ENCODE measurements at regions of chr17 and their contacts with region 1.

Region 1: DNA sequence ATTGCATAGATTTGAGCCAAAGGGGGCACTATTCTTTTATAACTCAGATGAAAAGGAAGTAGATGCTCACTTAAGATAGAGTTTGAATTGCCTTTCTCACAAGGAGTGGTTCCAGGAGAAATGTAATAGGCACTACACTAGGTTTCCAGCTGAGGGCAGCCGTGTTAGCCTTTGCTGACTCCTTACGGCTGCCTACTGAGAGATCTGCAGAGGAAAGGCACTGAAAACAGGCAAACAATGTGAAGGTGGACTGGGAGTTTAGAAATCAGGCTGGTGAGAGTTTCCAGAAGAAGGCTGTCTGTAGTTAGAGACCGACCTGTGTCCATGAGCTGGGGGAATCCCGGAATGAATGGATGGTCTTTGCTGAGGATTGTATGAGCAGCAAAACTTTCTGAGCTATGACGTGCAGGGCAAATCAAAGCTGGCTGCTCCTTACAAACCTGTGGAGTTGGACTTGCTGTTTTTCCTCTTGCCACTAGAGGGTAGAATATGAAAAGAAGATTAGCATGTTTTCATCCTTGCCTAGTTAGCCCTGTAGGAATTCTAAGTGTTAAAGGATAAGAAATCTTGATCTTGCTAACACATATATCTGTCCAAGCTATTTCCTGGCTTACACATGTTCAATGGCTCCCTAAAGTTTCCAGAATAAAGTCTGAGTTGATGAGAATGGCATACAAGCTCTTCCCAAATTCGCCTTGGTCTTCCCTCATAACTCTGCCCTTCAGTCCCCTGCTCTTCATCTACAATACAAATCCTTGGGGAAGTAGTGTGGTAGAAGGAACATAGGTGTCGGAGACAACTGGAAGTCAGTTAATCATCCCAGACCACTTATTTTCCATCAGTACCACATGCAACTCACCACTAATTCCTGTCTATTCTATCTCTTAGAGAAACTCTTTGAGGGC is 20.1 kb upstream of the TAOK1 start:
- DNase-seq: peak; percentile 60
- ATAC-seq: peak; percentile 93
- H3K4me3 Mint-ChIP-seq: no peak overlapping the region
- H3K27ac Mint-ChIP-seq: no peak overlapping the region
- H3K4me1 Mint-ChIP-seq: no peaks in the 10 kb centered on the region
- H3K27me3 Mint-ChIP-seq: no peaks in the 10 kb centered on the region

Region 2: DNA sequence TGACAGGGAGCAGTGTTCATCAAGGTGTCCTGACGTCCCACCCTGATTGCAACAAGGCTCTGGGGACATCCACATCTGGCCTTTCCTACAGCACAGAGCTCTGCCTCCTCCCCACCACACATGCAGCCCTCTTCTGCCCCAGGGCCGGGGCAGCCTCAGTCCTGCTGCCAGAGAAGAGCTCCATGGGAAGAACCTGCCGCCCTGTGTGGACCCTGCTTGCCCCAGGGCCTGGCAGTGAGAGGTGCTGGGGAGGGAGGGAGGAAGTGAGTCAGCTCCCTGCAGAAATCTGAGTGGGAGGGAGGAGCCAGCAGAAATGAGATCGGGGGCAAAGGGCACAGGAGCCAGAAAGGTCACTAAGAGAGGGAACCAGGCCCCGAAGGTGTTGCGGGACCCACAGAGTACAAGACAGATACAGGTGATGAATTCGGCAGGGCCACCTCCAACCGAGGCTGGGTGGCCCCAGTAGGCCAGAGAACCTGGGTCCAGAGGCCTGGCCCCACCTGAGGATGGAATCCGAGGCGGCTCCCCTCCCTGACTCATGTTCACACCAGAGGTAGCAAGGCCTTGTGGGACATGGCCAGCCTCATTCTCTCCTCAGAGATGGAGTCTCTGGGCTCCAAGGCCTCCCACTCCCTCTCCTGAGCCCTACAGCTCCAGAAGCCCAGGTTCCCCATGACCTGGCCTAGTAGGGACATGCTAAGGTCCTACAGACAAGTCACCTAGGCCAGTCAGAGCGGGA is 214.7 kb before region 1 on chr17:
- CTCF ChIA-PET with region 1: no interaction called
- POLR2A ChIA-PET with region 1: no interaction called
- DNase-seq: peak; percentile 74
- ATAC-seq: peak; percentile 91
- H3K4me3 Mint-ChIP-seq: peak overlapping the region; percentile 20
- H3K27ac Mint-ChIP-seq: peak overlapping the region; percentile 84
- H3K4me1 Mint-ChIP-seq: peaks cover 55% of the 10 kb centered on the region
- H3K27me3 Mint-ChIP-seq: no peaks in the 10 kb centered on the region

Region 3: DNA sequence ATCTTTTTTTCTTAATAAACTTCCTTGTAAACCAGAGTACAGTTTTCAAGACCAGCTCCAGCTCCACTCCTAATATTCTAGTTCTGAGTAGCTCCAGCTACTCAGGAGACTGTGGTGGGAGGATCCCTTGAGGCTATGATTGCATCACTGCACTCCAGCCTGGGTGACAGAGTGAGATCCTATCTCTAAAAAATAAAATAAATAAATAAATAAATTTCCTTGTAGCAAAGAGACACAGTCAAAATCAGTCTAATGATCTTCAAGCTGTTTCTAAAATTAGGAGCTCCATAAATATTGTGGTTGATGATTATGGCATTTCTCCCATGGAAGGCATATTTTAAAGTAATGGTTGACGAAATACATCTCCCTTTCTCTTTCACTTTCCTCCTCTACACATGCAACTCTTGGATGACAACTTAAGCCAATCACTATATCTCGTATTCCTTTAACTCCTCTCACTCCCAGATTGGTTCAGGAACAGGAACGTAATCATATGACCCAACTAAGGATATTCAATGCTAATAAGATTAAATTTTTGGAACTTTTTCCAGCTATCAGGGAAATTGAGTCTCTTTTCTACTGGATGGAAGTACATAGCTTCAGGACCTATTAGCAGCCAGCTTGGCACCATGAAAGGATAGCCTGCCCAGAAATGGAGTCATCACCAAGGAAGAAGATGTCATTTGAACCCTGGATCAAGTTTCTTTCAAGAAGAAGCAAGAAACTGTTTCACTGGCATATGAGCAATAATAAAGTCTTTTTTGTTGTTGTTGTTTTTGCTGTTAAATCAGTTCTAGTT is 22.1 kb before region 1 on chr17:
- CTCF ChIA-PET with region 1: interaction called, 18 read pairs
- POLR2A ChIA-PET with region 1: no interaction called
- DNase-seq: no peak
- ATAC-seq: no peak
- H3K4me3 Mint-ChIP-seq: no peak overlapping the region
- H3K27ac Mint-ChIP-seq: no peak overlapping the region
- H3K4me1 Mint-ChIP-seq: no peaks in the 10 kb centered on the region
- H3K27me3 Mint-ChIP-seq: peaks cover 10% of the 10 kb centered on the region

Region 4: GRCh38 chr17:29384900-29385299 is 14.8 kb after region 1 on chr17:
- CTCF ChIA-PET with region 1: interaction called, 42 read pairs
- POLR2A ChIA-PET with region 1: no interaction called
- DNase-seq: no peak
- ATAC-seq: no peak
- H3K4me3 Mint-ChIP-seq: no peak overlapping the region
- H3K27ac Mint-ChIP-seq: no peak overlapping the region
- H3K4me1 Mint-ChIP-seq: peaks cover 12% of the 10 kb centered on the region
- H3K27me3 Mint-ChIP-seq: no peaks in the 10 kb centered on the region

Region 5: DNA sequence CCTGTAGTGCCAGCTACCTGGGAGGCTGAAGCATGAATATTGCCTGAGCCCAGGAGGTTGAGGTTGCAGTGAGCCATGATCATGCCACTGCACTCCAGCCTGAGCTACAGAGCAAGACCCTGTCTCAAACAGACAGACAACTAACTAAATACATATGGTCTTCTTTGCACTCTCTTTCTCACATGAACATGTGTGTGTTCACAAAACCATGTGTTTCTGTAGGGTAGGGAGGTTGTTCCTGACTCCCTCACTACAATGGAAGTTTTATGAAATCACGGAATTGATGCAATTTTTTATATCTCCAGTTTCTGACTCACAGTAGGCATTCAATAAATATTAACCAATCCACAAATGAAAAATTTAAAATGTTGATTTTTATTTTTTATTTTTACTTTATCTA is 148.3 kb after region 1 on chr17:
- CTCF ChIA-PET with region 1: interaction called, 20 read pairs
- POLR2A ChIA-PET with region 1: no interaction called
- DNase-seq: no peak
- ATAC-seq: no peak
- H3K4me3 Mint-ChIP-seq: no peak overlapping the region
- H3K27ac Mint-ChIP-seq: no peak overlapping the region
- H3K4me1 Mint-ChIP-seq: no peaks in the 10 kb centered on the region
- H3K27me3 Mint-ChIP-seq: no peaks in the 10 kb centered on the region

Region 6: GRCh38 chr17:29533976-29534375 is 163.9 kb after region 1 on chr17:
- CTCF ChIA-PET with region 1: interaction called, 76 read pairs
- POLR2A ChIA-PET with region 1: interaction called, 3 read pairs
- DNase-seq: no peak
- ATAC-seq: no peak
- H3K4me3 Mint-ChIP-seq: no peak overlapping the region
- H3K27ac Mint-ChIP-seq: no peak overlapping the region
- H3K4me1 Mint-ChIP-seq: no peaks in the 10 kb centered on the region
- H3K27me3 Mint-ChIP-seq: no peaks in the 10 kb centered on the region

Region 7: DNA sequence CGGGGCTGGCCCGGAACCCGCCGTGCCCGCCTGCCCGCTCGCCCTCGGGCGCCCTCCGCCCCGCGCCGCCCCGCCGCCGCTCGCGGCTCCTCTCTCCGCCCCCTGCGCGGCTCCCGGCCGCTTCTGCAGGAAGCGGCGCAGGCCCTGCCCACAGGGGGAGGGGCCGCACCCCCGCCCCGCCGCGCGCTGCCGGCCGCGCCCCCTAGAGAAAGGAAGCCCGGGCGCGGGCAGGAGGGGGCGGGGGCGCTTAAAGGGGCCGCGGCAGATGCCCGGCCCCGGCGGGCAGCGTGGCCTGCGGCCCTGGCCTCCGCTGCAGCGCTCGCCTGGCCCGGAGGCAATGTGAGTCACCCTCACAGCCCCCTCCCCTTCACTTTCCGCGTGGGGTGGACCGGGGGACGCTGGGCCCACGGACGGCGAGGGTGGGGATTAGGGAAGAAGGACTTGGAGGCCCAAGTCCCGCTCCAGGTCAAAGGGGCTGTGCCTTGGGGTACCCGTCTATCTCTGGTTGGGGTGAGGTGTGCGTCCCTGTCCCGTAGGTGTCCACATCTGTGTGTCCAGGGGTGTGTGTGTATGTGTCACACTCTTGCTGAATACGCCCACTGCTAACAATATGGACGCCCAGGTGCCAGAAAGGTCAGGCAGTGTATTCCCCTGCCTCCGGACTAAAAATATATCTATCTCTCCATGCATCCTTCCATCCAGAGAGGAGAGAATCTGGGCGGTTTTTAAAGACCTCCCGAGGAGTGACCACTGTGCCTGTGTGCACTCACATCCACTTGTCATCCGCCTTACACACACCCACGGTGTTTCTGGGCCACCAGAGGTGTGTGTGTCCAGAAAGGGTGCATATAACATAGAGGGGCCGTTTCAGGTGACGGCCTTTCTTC is 219.7 kb after region 1 on chr17 and contains the start of gene GIT1:
- CTCF ChIA-PET with region 1: interaction called, 22 read pairs
- POLR2A ChIA-PET with region 1: no interaction called
- DNase-seq: peak; percentile 87
- ATAC-seq: peak; percentile 74
- H3K4me3 Mint-ChIP-seq: peak within 1 kb of the TSS; percentile 97
- H3K27ac Mint-ChIP-seq: peak within 1 kb of the TSS; percentile 90
- H3K4me1 Mint-ChIP-seq: peaks cover 73% of the 10 kb centered on the region
- H3K27me3 Mint-ChIP-seq: no peaks in the 10 kb centered on the region
- total RNA-seq, gene GIT1: 72.7 to 75.1 TPM